Lower leg skin (tissue), 4 donors: ENCODE measurements at regions of chr16 and their contacts with region 1.

Region 1: DNA sequence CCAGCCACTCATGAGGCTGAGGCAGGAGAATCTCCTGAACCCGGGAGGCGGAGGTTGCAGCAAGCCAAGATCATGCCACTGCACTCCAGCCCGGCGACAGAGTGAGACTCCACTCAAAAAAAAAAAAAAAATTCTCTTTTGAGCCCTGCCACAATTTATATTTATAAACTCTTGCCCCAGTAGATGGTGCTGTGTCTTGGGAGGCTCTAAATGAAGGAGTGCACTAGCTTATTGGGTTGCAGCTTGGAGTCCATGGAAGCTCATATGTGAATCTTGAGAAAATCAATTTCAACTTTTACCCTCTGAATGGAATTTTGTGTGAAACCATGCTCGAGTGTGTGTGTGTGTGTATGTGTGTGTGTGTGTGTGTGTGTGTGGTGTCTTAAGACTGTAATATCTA is 420.1 kb downstream of the HS3ST4 start:
- DNase-seq: no peak
- H3K4me3 ChIP-seq: no peak overlapping the region
- CTCF ChIP-seq: no peak
- POLR2A ChIP-seq: no peak

Region 2: DNA sequence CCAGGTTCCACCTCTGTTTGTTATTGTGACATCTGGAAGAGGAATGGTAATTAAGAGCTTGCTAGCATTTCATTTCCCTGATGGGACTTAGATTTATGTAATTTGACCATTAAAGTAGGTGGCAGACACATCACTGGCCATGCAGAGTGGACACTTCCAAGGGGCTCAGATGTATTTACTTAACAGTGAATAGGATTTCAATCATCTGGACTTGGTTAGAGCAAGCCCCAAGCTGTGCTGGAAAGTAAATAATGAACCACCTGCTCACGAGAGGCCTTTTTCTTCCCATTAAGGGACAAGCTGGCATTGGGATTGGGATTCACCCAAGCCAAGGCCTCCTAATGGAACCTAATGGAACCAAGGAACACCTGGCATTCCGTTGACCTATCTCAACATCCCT is 24.8 kb before region 1 on chr16:
- intact Hi-C with region 1: loop called (anchors 2 kb)
- DNase-seq: no peak
- H3K4me3 ChIP-seq: no peak overlapping the region
- CTCF ChIP-seq: no peak
- POLR2A ChIP-seq: no peak

Region 3: DNA sequence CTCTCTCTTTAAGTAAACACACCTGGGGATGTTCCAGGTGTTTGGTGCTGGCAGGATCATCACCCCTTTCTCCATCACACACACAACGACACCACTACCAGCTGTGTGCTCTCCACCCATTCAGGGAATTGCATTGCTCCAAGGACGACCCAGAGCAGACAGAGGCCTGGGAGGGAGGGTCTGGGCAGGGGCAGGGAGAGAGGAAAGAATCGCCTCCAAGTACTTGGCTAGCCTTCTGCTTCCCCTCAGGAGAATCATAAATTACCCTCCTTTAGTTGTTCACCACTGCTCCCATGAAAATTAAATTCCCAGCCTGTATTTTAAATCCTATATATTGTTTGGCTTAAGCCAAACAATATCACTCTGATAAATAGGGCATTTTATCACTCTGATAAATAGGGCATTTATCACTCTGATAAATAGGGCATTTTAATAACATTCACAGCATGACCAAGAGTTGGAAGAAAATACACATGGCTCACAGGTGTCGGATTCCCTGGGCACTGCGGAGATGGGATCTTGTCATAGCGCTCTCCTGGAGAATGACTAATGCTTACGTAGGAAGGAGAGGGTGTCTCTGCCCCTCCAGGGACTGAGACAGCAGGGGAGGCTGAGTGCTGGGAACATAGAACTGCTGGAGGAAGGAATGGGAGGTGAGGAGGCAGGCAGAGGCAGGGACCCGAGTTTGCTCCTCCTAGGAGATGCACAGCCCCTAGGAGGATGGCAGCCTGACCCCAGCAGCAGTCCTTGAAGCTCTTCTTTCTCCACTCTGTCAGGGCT is 253.5 kb after region 1 on chr16:
- intact Hi-C with region 1: no loop called
- DNase-seq: no peak
- H3K4me3 ChIP-seq: no peak overlapping the region
- CTCF ChIP-seq: no peak
- POLR2A ChIP-seq: no peak